ENCODE measurements at regions of chr12 and their contacts with region 1.

Region 1: DNA sequence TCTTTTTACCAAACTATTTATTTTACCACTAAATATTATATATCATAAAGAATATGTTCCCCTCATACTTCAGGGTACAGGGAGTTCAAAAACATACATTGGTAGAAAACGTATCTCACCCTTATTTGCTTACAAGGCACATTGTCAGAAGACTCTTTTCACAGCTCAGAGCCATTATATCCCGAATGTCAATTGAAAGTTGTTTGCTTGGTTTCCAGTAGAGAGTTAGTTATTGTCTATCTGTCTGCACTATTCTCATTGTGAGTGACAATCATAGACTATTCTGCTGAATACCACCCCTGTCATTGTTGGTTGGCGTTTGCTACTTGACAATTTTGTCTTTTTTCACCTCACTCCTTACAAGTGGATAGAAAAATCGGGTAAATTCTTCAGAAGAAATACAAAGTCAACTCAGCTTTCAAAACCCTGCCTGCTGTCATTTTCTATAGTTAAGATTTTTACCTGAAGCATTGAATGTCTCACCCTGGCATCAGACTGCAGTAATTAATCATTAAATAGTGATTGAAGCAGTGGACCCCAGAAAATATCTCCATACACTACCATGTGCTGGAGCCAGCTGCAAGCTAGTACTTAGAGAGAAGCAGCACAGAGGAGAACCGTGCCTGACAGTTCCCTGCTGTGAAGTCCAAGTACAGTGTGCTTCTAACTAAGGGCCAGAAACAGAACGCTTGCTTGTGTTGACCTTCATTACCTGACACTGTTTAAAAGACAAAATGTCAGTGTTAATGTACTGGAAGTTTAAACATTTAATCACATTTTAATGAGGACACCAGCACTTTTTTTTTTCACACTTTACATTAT is 510.6 kb downstream of the RERGL start:
- DNase-seq: no peak
- ATAC-seq: no peak
- H3K4me3 ChIP-seq: no peak overlapping the region
- H3K27ac ChIP-seq: no peak overlapping the region
- H3K4me1 ChIP-seq: no peaks in the 10 kb centered on the region
- H3K27me3 ChIP-seq: no peaks in the 10 kb centered on the region
- CTCF ChIP-seq: no peak
- POLR2A ChIP-seq: no peak
- RAD21 ChIP-seq: no peak

Region 2: DNA sequence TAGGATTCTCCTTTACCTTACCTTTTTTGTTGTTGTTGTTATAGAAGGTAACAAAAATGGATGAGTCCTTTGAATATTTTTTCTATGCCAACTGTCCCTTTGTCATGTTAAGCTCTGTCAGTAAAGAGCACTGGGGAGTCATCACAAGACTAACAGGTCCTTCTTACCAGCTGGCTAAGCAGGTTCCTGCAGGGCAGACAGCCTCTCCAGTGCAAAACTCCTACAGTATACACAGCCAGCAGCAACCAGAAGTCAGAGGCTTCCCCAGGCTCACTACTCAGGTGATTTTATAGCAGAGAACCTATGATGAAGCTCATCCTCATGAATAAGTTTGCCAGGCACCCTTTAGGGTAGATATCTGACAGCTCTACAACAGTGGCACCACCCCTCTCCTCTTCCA is 239.5 kb after region 1 on chr12:
- CTCF ChIA-PET with region 1: no interaction called
- POLR2A ChIA-PET with region 1: no interaction called
- RAD21 ChIA-PET with region 1: no interaction called
- intact Hi-C with region 1: loop called (anchors 5 kb)
- DNase-seq: no peak
- ATAC-seq: no peak
- H3K4me3 ChIP-seq: no peak overlapping the region
- H3K27ac ChIP-seq: no peak overlapping the region
- H3K4me1 ChIP-seq: no peaks in the 10 kb centered on the region
- H3K27me3 ChIP-seq: no peaks in the 10 kb centered on the region
- CTCF ChIP-seq: no peak
- POLR2A ChIP-seq: no peak
- RAD21 ChIP-seq: no peak

Region 3: DNA sequence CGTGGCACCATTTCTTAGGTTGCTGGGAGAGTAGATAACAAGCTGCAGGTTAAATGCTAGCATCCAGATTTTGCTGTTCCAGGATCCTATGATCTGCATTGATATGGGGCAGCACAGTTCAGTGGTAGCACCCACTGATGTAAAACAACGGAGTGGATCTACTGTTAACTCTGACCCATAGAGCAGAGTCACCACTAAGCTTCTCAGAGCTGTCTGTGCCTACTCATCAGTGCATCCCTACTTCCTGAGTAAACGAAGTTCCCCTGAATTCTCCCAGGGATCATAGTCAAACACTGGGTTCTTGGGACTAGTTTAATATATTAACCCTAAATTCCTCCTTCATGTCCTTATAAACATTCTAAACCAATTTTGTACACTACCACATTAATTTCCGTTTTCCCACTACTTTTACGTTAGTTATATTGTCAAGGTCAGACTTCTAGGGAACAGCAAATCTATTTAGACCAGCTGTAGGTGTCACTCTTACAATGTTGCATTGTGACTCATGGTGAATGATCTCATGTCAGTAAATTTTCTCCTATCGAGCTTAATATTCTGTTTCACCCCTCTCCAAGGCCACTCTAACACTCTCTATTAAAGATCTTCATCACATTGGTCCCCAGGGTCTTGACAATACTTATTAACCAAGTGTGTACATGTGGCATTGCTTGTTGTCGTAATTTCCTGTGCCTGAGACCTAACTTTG is 500.3 kb after region 1 on chr12:
- CTCF ChIA-PET with region 1: no interaction called
- POLR2A ChIA-PET with region 1: no interaction called
- RAD21 ChIA-PET with region 1: no interaction called
- intact Hi-C with region 1: no loop called
- DNase-seq: no peak
- ATAC-seq: no peak
- H3K4me3 ChIP-seq: no peak overlapping the region
- H3K27ac ChIP-seq: no peak overlapping the region
- H3K4me1 ChIP-seq: no peaks in the 10 kb centered on the region
- H3K27me3 ChIP-seq: no peaks in the 10 kb centered on the region
- CTCF ChIP-seq: no peak
- POLR2A ChIP-seq: no peak
- RAD21 ChIP-seq: no peak

Measured in HCT116 (cell line).